ENCODE measurements at regions of chr5 and their contacts with region 1.

Region 1: GRCh38 chr5:109409844-109410388 is at the start of gene PJA2:
- DNase-seq: peak; percentile 100
- H3K4me3 Mint-ChIP-seq: peak within 1 kb of the TSS; percentile 99
- H3K27ac Mint-ChIP-seq: peak within 1 kb of the TSS; percentile 98
- H3K4me1 Mint-ChIP-seq: peaks cover 11% of the 10 kb centered on the region
- H3K27me3 Mint-ChIP-seq: no peaks in the 10 kb centered on the region
- CTCF ChIP-seq: no peak
- total RNA-seq, gene PJA2: 54.4 and 56.9 TPM in 2 replicates

Region 2: DNA sequence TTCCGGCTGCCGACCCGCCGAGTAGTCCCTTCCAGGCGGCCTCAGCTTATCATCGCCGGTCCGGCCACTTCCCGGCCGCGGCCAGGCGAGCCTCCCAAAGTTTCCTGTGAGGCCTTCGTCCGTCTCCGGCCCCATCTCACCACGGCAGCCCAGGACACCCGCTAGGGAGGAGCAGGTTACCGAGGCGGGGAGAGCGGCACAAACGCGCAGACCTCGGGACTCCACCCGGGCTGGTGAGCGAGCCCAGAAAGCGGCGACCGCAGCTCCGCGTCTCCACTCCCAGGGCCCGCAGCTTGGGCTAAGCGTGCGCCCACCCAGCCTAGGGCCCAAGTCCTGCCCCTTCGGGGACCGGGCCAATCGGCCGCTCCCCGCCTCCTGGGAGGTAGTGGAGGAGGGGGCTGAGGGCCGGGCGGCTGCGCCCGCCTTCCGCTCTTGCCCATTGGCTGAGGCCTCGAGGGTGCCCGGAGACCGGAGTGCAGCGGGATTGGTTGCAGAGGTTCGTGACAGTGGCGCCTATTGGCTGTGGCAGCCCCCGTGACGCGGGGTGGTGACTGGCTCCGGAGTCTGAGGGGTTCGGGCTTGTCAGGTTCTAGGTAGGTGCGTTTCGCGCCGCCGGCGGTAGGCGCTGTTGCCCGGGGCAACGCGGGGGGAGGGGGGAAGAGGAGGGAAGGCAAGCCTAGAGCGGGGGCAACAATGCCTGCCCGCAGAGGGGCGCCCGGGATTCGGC is 661.4 kb before region 1 on chr5:
- CTCF ChIA-PET with region 1: no interaction called
- POLR2A ChIA-PET with region 1: interaction called, 21 read pairs
- intact Hi-C with region 1: no loop called
- DNase-seq: peak; percentile 98
- H3K4me3 Mint-ChIP-seq: peak overlapping the region; percentile 87
- H3K27ac Mint-ChIP-seq: peak overlapping the region; percentile 99
- H3K4me1 Mint-ChIP-seq: peaks cover 6% of the 10 kb centered on the region
- H3K27me3 Mint-ChIP-seq: no peaks in the 10 kb centered on the region
- CTCF ChIP-seq: no peak

Region 3: GRCh38 chr5:109304309-109304708 is 105.6 kb before region 1 on chr5:
- CTCF ChIA-PET with region 1: no interaction called
- POLR2A ChIA-PET with region 1: no interaction called
- intact Hi-C with region 1: no loop called
- DNase-seq: no peak
- H3K4me3 Mint-ChIP-seq: no peak overlapping the region
- H3K27ac Mint-ChIP-seq: no peak overlapping the region
- H3K4me1 Mint-ChIP-seq: no peaks in the 10 kb centered on the region
- H3K27me3 Mint-ChIP-seq: peaks cover 1% of the 10 kb centered on the region
- CTCF ChIP-seq: no peak

Region 4: DNA sequence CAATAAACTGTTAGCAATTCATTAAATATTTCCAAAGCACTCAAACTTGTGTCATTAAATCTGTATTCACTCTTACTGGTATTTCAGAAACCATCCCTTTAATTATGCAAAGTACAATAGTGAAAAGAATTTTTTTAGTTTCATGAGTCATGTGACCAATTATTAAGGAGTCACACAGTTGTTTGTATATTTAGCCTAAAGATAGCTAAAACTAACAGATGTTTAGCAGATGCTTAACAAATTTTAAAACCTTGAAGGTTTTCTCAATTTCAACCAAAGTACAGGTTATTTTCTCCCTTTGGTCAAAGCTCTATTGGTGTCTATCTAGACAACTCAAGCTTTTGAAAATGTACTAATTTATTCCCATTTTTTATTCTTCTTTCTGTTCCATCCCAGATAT is 44.3 kb before region 1 on chr5:
- CTCF ChIA-PET with region 1: no interaction called
- POLR2A ChIA-PET with region 1: interaction called, 11 read pairs
- intact Hi-C with region 1: no loop called
- DNase-seq: no peak
- H3K4me3 Mint-ChIP-seq: no peak overlapping the region
- H3K27ac Mint-ChIP-seq: no peak overlapping the region
- H3K4me1 Mint-ChIP-seq: no peaks in the 10 kb centered on the region
- H3K27me3 Mint-ChIP-seq: no peaks in the 10 kb centered on the region
- CTCF ChIP-seq: no peak

Region 5: GRCh38 chr5:109399092-109399759 is 10.7 kb before region 1 on chr5:
- CTCF ChIA-PET with region 1: no interaction called
- POLR2A ChIA-PET with region 1: interaction called, 16 read pairs
- intact Hi-C with region 1: no loop called
- DNase-seq: no peak
- H3K4me3 Mint-ChIP-seq: no peak overlapping the region
- H3K27ac Mint-ChIP-seq: no peak overlapping the region
- H3K4me1 Mint-ChIP-seq: peaks cover 10% of the 10 kb centered on the region
- H3K27me3 Mint-ChIP-seq: no peaks in the 10 kb centered on the region
- CTCF ChIP-seq: no peak

Region 6: DNA sequence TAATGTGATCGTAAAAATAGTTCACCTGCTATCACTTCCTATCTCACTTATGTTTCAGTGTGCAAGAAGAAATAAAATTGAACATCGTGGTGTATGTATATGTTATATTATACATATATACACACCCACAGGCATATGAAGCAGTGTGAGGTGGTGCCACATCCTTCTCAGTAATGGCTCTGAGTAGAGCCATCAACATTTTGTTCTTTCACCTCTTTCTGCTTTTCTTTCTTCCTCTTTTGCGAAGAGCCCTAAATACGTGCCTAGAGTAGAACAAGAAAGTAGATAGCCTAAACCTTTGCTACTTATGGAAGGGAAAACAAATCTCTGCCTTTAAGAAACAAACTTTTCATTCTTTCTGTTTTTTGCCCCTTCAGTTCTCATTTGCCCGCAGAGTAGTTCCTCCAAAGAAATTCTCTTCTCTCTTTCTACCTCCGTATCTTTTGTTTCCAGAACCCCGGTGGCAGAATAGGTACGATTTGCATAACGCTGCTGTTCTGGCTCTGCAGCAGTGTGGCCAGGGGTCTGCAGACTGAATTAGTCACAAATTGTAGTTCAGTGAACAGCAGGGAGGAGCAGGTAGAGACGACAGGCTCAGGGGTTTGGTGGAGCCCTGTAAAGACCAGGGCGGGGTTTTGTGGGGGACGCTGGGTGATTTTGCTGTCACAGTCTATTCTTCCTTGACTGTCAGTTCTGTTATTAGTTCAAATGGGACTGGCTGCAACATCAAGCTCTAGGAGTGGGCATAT is 40.4 kb after region 1 on chr5:
- CTCF ChIA-PET with region 1: interaction called, 3 read pairs
- POLR2A ChIA-PET with region 1: interaction called, 80 read pairs
- intact Hi-C with region 1: loop called (anchors 1 kb)
- DNase-seq: no peak
- H3K4me3 Mint-ChIP-seq: no peak overlapping the region
- H3K27ac Mint-ChIP-seq: no peak overlapping the region
- H3K4me1 Mint-ChIP-seq: peaks cover 1% of the 10 kb centered on the region
- H3K27me3 Mint-ChIP-seq: no peaks in the 10 kb centered on the region
- CTCF ChIP-seq: no peak

Region 7: DNA sequence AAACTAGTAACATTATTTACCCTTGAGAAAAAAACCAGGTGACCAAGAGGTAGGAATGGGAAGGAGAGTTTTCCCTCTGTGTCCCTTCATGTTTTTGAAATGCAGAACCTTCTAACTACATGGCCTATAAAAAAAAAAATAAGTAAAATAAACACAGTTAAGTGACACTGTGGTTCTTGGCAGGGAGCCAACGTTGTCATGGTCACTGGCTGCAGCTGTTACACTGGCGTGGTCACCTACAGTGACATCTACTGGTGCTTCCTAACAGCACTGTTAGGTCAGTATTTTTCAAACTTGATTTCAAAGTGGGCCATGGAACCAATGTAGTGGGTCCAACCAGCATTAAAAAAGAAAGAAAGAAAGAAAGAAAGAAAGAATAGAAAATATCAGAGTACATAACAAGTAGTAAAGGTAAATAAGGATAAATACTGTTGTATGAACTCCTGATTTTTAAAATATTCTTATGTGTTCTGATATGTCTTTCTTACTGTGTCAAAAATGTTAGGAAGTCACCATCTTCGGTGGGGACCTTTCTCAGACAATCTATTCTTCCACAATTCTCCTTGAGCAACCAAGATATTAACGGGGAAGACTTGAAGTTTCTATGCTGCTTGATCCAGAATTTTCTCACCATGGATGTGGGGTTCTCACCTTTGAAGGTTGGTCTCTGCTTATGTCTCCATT is 59.0 kb after region 1 on chr5:
- CTCF ChIA-PET with region 1: interaction called, 9 read pairs
- POLR2A ChIA-PET with region 1: interaction called, 13 read pairs
- intact Hi-C with region 1: loop called (anchors 2 kb)
- DNase-seq: peak; percentile 96
- H3K4me3 Mint-ChIP-seq: no peak overlapping the region
- H3K27ac Mint-ChIP-seq: peak overlapping the region; percentile 24
- H3K4me1 Mint-ChIP-seq: peaks cover 6% of the 10 kb centered on the region
- H3K27me3 Mint-ChIP-seq: no peaks in the 10 kb centered on the region
- CTCF ChIP-seq: peak; percentile 63

Region 8: GRCh38 chr5:109496109-109496508 is 86.2 kb after region 1 on chr5:
- CTCF ChIA-PET with region 1: no interaction called
- POLR2A ChIA-PET with region 1: no interaction called
- intact Hi-C with region 1: no loop called
- DNase-seq: no peak
- H3K4me3 Mint-ChIP-seq: no peak overlapping the region
- H3K27ac Mint-ChIP-seq: no peak overlapping the region
- H3K4me1 Mint-ChIP-seq: no peaks in the 10 kb centered on the region
- H3K27me3 Mint-ChIP-seq: no peaks in the 10 kb centered on the region
- CTCF ChIP-seq: no peak

Measured in MCF 10A (cell line).